ENCODE measurements at regions of chr3 and their contacts with region 1.

Region 1: GRCh38 chr3:47836986-47837385 is 34.0 kb downstream of the DHX30 start:
- DNase-seq: no peak
- ATAC-seq: no peak
- H3K4me3 ChIP-seq: no peak overlapping the region
- H3K4me3 Mint-ChIP-seq: no peak overlapping the region
- H3K27ac ChIP-seq: no peak overlapping the region
- H3K27ac Mint-ChIP-seq: no peak overlapping the region
- H3K4me1 ChIP-seq: peaks cover 4% of the 10 kb centered on the region
- H3K4me1 Mint-ChIP-seq: peaks cover 4% of the 10 kb centered on the region
- H3K27me3 ChIP-seq: no peaks in the 10 kb centered on the region
- H3K27me3 Mint-ChIP-seq: no peaks in the 10 kb centered on the region
- CTCF ChIP-seq: no peak

Region 2: GRCh38 chr3:48151058-48151806 is 314.2 kb after region 1 on chr3:
- CTCF ChIA-PET with region 1: no interaction called
- POLR2A ChIA-PET with region 1: no interaction called
- intact Hi-C with region 1: loop called in 1 of 2 experiments (anchors 2 kb)
- DNase-seq: peak; percentile 19 to 70 (median 36)
- ATAC-seq: peak; percentile 79
- H3K4me3 ChIP-seq: no peak overlapping the region
- H3K4me3 Mint-ChIP-seq: no peak overlapping the region
- H3K27ac ChIP-seq: no peak overlapping the region
- H3K27ac Mint-ChIP-seq: no peak overlapping the region
- H3K4me1 ChIP-seq: no peaks in the 10 kb centered on the region
- H3K4me1 Mint-ChIP-seq: no peaks in the 10 kb centered on the region
- H3K27me3 ChIP-seq: no peaks in the 10 kb centered on the region
- H3K27me3 Mint-ChIP-seq: no peaks in the 10 kb centered on the region
- CTCF ChIP-seq: peak; percentile 46

Measured in CD4-positive, alpha-beta T cell (primary cell).